CD4-positive, alpha-beta T cell (primary cell): ENCODE measurements at regions of chr15 and their contacts with region 1.

Region 1: GRCh38 chr15:52509500-52510245 is 19.0 kb downstream of the MYO5A start:
- DNase-seq: no peak
- ATAC-seq: no peak
- H3K4me3 ChIP-seq: no peak overlapping the region
- H3K4me3 Mint-ChIP-seq: no peak overlapping the region
- H3K27ac ChIP-seq: no peak overlapping the region
- H3K27ac Mint-ChIP-seq: no peak overlapping the region
- H3K4me1 ChIP-seq: peaks cover 8% of the 10 kb centered on the region
- H3K4me1 Mint-ChIP-seq: peaks cover 47% of the 10 kb centered on the region
- H3K27me3 ChIP-seq: no peaks in the 10 kb centered on the region
- H3K27me3 Mint-ChIP-seq: no peaks in the 10 kb centered on the region
- CTCF ChIP-seq: no peak

Region 2: GRCh38 chr15:51874751-51875528 is 634.7 kb before region 1 on chr15:
- CTCF ChIA-PET with region 1: no interaction called
- POLR2A ChIA-PET with region 1: no interaction called
- intact Hi-C with region 1: no loop called
- DNase-seq: no peak
- ATAC-seq: no peak
- H3K4me3 ChIP-seq: no peak overlapping the region
- H3K4me3 Mint-ChIP-seq: no peak overlapping the region
- H3K27ac ChIP-seq: no peak overlapping the region
- H3K27ac Mint-ChIP-seq: no peak overlapping the region
- H3K4me1 ChIP-seq: no peaks in the 10 kb centered on the region
- H3K4me1 Mint-ChIP-seq: peaks cover 21% of the 10 kb centered on the region
- H3K27me3 ChIP-seq: no peaks in the 10 kb centered on the region
- H3K27me3 Mint-ChIP-seq: no peaks in the 10 kb centered on the region
- CTCF ChIP-seq: no peak

Region 3: DNA sequence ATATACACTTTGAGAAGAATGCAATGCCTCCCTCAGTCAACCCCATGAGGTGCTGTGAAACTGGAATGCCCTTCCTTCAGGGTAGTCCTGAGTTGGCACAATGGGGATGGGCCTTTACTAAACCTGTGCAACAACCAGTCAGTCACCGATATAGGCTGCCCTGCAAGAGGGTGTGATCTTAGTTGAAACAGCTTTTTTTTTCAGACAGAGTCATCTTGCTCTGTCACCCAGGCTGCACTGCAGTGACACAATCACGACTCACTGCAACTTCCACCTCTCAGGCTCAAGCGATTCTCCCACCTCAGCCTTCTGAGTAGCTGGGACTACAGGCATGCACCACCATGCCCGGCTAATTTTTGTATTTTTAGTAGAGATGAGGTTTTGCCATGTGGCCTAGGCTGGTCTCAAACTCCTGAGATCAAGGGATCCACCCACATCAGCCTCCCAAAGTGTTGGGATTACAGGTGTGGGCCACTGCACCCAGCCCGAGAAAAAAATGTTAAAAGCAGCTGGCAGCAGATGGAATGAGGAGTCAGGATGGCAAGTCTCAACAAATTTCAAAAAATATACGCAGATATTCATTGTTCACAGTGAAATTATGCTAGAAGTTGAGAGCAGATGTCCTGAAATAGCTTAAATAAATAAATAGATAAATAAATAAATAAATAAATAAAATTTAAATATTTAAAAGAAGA is 12.8 kb before region 1 on chr15:
- CTCF ChIA-PET with region 1: interaction called, 10 read pairs
- POLR2A ChIA-PET with region 1: no interaction called
- intact Hi-C with region 1: loop called in 1 of 2 experiments (anchors 2 kb)
- DNase-seq: peak in 2 of 14 experiments; percentile 28 to 37
- ATAC-seq: no peak
- H3K4me3 ChIP-seq: no peak overlapping the region
- H3K4me3 Mint-ChIP-seq: no peak overlapping the region
- H3K27ac ChIP-seq: no peak overlapping the region
- H3K27ac Mint-ChIP-seq: no peak overlapping the region
- H3K4me1 ChIP-seq: peaks cover 7% of the 10 kb centered on the region
- H3K4me1 Mint-ChIP-seq: peaks cover 37% of the 10 kb centered on the region
- H3K27me3 ChIP-seq: no peaks in the 10 kb centered on the region
- H3K27me3 Mint-ChIP-seq: no peaks in the 10 kb centered on the region
- CTCF ChIP-seq: no peak

Region 4: DNA sequence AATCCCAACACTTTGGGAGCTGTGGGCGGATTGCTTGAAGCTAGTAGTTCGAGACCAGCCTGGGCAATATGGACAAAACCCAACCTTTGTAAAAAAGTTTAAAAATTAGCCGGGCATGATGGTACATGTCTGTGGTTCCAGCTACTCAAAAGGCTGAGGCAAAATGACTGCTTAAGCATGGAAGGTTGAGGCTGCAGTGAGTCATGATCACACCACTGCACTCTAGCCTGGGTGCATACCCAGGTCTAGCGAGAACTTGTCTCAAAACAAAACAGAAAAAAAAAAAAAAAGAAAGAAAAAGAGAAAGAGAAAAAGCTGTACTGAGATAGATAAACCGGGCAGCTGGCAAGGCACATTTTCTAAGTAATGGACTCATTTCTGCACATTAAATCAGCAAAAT is 48.5 kb after region 1 on chr15:
- CTCF ChIA-PET with region 1: no interaction called
- POLR2A ChIA-PET with region 1: no interaction called
- intact Hi-C with region 1: no loop called
- DNase-seq: peak in 8 of 14 experiments; percentile 9 to 59 (median 26)
- ATAC-seq: peak; percentile 72
- H3K4me3 ChIP-seq: no peak overlapping the region
- H3K4me3 Mint-ChIP-seq: no peak overlapping the region
- H3K27ac ChIP-seq: no peak overlapping the region
- H3K27ac Mint-ChIP-seq: peak overlapping the region; percentile 45
- H3K4me1 ChIP-seq: peaks cover 18% of the 10 kb centered on the region
- H3K4me1 Mint-ChIP-seq: peaks cover 64% of the 10 kb centered on the region
- H3K27me3 ChIP-seq: no peaks in the 10 kb centered on the region
- H3K27me3 Mint-ChIP-seq: no peaks in the 10 kb centered on the region
- CTCF ChIP-seq: no peak